ENCODE measurements at regions of chr18 and their contacts with region 1.

Region 1: GRCh38 chr18:76709659-76710645 is 112.4 kb upstream of the ZNF236 start:
- ATAC-seq: peak; percentile 82 to 96 (median 94)
- H3K4me3 ChIP-seq: no peak overlapping the region
- H3K27ac ChIP-seq: no peak overlapping the region
- H3K4me1 ChIP-seq: peaks cover 7 to 9% of the 10 kb centered on the region in 2 donors

Region 2: GRCh38 chr18:76145521-76146376 is 564.2 kb before region 1 on chr18:
- in situ Hi-C with region 1: no loop called
- ATAC-seq: peak in 5 of 8 experiments; percentile 91 to 94 (median 92)
- H3K4me3 ChIP-seq: peak overlapping the region in 2 of 5 donors; percentile 5 to 11
- H3K27ac ChIP-seq: peak overlapping the region; percentile 83 to 89
- H3K4me1 ChIP-seq: peaks cover 44 to 55% of the 10 kb centered on the region in 2 donors

Region 3: GRCh38 chr18:76398896-76399612 is 310.9 kb before region 1 on chr18:
- in situ Hi-C with region 1: loop called in 5 of 9 experiments (anchors 10 to 25 kb)
- ATAC-seq: peak; percentile 79 to 95 (median 92)
- H3K4me3 ChIP-seq: no peak overlapping the region
- H3K27ac ChIP-seq: no peak overlapping the region
- H3K4me1 ChIP-seq: peaks cover 19 to 22% of the 10 kb centered on the region in 2 donors

Region 4: DNA sequence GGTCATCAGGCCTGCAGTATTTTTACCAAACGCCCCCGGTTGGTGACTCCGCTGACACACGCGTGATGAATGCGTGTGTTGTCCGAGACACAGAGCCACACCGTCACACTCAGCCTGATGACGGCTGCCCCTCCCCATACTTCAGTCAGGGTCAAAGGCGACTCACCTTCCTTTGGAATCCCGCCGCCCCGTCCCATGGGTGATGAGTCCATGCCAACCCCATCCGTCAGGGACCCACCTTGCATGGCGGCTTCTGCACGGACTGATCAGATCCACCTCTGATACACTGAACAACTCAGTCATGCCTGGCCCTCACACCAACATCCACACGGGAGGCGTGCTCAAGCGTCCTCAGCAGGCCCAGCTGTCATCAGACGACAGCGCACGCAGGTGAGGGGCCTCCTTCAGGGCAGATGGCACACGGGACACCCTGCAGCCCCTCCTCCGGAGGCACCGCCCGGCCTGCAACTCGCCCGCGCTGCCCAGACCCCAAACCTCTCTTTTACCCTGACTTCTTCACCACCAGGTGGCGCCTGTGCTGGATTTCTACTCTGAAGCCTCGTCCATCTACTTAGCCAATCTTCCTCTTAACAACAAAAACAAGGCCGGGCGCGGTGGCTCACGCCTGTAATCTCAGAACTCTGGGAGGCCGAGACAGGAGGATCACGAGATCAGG is 304.1 kb before region 1 on chr18:
- in situ Hi-C with region 1: loop called in 2 of 9 experiments (anchors 10 to 25 kb)
- ATAC-seq: peak in 4 of 8 experiments; percentile 29 to 88 (median 62)
- H3K4me3 ChIP-seq: no peak overlapping the region
- H3K27ac ChIP-seq: no peak overlapping the region
- H3K4me1 ChIP-seq: no peaks in the 10 kb centered on the region

Region 5: DNA sequence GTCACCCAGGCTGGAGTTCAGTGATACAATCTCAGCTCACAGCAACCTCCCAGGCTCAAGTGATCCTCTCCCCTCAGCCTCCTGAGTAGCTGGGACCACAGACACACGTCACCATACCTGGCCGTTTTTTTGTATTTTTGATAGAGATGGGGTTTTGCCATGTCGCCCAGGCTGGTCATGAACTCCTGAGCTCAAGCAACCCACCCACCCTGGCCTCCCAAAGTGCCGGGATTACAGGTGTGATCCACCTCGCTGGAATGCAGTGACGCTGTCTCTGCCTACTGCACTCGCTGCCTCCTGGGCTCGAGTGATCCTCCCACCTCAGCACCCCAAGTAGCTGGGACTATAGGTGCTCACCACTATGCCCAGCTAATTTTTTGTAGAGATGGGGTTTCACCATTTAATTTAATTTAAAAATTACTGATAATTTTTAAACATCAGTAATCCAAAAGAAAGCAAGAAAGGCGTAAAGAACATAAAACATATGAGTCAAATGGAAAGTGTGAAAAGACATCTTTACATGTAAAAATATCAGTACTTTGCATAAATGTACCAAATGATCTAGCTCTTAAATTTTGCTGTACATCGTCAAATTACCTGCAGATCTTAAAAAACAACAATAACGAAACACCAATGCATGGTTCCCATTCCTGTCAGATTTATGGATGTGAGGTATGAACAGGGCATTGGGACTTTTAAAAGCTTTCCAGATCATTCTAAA is 109.6 kb after region 1 on chr18:
- in situ Hi-C with region 1: no loop called
- ATAC-seq: no peak
- H3K4me3 ChIP-seq: no peak overlapping the region
- H3K27ac ChIP-seq: no peak overlapping the region
- H3K4me1 ChIP-seq: peaks cover 10 to 14% of the 10 kb centered on the region in 2 donors